ENCODE measurements at regions of chr2 and their contacts with region 1.

Region 1: DNA sequence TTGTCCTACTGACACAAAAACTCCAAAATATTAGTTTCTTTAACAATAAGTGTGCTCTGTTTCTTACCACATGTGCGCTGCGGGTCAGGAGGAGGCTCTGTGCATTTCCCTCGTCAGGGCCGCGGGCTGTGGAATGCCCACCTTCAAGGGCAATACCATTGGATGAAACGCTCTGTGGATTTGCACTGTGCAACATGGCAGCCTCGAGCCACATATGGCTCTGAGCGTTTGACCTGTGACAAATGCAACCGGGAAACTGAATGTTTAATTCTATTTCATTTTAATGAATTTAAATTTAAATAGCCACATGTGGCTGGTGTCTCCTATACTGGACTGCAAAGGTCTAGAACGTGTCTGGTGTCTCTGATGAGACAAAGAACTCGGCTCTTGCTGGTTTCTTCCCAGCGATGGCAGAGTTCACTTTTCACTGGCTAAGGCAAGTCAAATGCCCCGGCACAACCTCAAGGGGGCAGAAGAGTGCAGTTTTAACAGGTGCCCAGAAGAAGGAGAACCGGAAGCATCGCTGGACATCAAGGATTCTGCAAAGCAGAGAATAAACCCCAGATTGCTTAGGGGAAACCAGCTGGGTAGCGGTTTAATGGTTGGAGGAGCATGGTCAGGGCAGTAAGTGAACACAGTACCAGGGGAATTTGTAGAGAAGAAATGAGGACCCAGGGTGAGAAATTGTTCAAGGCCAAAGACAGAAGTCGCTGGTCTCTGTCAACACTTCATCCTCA is 37.0 kb upstream of the TMEM18 start:
- DNase-seq: peak; percentile 46
- ATAC-seq: peak; percentile 94
- H3K4me3 ChIP-seq: no peak overlapping the region
- H3K27ac ChIP-seq: no peak overlapping the region
- H3K4me1 ChIP-seq: no peaks in the 10 kb centered on the region; a peak in 1 of 4 replicates
- H3K27me3 ChIP-seq: peaks cover 18% of the 10 kb centered on the region
- CTCF ChIP-seq: peak; percentile 61 to 91 (median 85)
- POLR2A ChIP-seq: no peak
- RAD21 ChIP-seq: peak; percentile 82

Region 2: GRCh38 chr2:696463-696862 is 17.7 kb before region 1 on chr2:
- CTCF ChIA-PET with region 1: no interaction called
- POLR2A ChIA-PET with region 1: no interaction called
- RAD21 ChIA-PET with region 1: no interaction called
- intact Hi-C with region 1: no loop called
- DNase-seq: no peak
- ATAC-seq: no peak
- H3K4me3 ChIP-seq: no peak overlapping the region
- H3K27ac ChIP-seq: no peak overlapping the region
- H3K4me1 ChIP-seq: peaks cover 12 to 16% of the 10 kb centered on the region in 2 experiments
- H3K27me3 ChIP-seq: no peaks in the 10 kb centered on the region
- CTCF ChIP-seq: no peak
- POLR2A ChIP-seq: no peak
- RAD21 ChIP-seq: no peak

Region 3: DNA sequence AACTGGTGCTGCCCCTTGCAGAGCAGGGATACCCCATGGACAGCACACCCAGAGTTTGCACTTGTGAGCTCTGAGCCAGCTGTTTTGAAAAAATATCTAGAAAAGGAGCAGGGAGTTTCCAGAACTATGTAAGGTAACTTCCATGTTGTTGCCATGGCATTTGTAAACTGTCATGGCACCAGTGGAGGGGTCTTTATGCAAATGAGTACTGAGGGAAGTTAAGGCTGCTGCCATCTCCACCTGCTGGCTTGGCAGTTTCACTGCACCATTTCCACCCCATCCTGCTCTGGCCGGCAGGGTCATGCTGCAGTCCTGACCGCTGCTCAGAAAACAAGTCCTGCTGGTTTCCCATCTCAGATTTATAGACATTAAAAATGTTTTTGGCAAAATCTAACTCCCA is 184.1 kb after region 1 on chr2:
- CTCF ChIA-PET with region 1: no interaction called
- POLR2A ChIA-PET with region 1: no interaction called
- RAD21 ChIA-PET with region 1: no interaction called
- intact Hi-C with region 1: loop called (anchors 2 kb)
- DNase-seq: peak; percentile 18
- ATAC-seq: peak; percentile 86
- H3K4me3 ChIP-seq: no peak overlapping the region
- H3K27ac ChIP-seq: no peak overlapping the region
- H3K4me1 ChIP-seq: peaks cover 0 to 5% of the 10 kb centered on the region in 2 experiments; a peak in 2 of 4 replicates
- H3K27me3 ChIP-seq: no peaks in the 10 kb centered on the region
- CTCF ChIP-seq: peak; percentile 36 to 66 (median 52); a peak in 5 of 6 replicates
- POLR2A ChIP-seq: no peak
- RAD21 ChIP-seq: peak; percentile 51

Region 4: GRCh38 chr2:1047485-1047884 is 333.3 kb after region 1 on chr2:
- CTCF ChIA-PET with region 1: no interaction called
- POLR2A ChIA-PET with region 1: no interaction called
- RAD21 ChIA-PET with region 1: no interaction called
- intact Hi-C with region 1: loop called (anchors 10 kb)
- DNase-seq: no peak
- ATAC-seq: no peak
- H3K4me3 ChIP-seq: no peak overlapping the region
- H3K27ac ChIP-seq: no peak overlapping the region
- H3K4me1 ChIP-seq: no peaks in the 10 kb centered on the region
- H3K27me3 ChIP-seq: peaks cover 3% of the 10 kb centered on the region; the same call in 1 of the 2 replicates
- CTCF ChIP-seq: no peak
- POLR2A ChIP-seq: no peak
- RAD21 ChIP-seq: no peak

Region 5: DNA sequence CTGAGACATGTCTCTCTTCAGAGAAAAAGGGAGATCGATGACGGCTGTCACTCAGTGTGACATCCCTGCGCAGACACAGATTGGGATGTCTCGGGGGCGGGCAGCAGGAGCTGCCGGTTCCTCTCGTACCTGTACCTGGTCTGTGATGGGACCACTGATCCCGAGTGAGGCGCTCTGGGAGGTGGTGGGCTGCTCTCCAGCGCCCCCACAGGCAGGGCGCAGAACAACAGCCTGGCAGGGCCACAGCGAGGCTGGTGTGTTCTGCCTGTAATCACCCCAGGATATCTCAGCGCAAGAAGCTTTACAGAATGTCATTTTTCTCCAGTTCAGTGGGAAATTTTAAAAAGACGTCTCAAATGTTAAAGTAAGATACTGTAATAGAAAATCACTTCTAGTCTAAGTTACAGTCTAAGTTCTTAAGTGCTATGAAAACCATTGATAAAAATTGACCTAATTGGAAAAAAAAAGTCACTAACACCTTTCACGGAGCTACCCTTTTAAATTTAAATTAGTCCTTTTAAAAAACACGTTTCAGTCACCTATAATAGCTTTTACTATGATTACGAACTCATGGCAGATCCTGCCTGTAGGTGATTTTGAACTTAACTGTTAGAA is 426.3 kb after region 1 on chr2:
- CTCF ChIA-PET with region 1: no interaction called
- POLR2A ChIA-PET with region 1: no interaction called
- RAD21 ChIA-PET with region 1: no interaction called
- intact Hi-C with region 1: loop called (anchors 10 kb)
- DNase-seq: no peak
- ATAC-seq: peak; percentile 99
- H3K4me3 ChIP-seq: no peak overlapping the region
- H3K27ac ChIP-seq: no peak overlapping the region
- H3K4me1 ChIP-seq: no peaks in the 10 kb centered on the region
- H3K27me3 ChIP-seq: peaks cover 3% of the 10 kb centered on the region; the same call in 1 of the 2 replicates
- CTCF ChIP-seq: peak; percentile 44 to 100 (median 93); a peak in 5 of 6 replicates
- POLR2A ChIP-seq: no peak
- RAD21 ChIP-seq: peak; percentile 38; the same call in 1 of the 2 replicates

Measured in HCT116 (cell line).